Activated T-helper 1 cell treated with anti-CD3 and anti-CD28 coated beads, Interleukin-12 subunit alpha, Interleukin-12 subunit beta, Interleukin-2, Interleukin-4 antibody, amounts not matched to agents 30 ng/mL and 10 ng/mL and 1 ng/mL, durations not matched to agents 14 hours and 24 hours and 36 hours (primary cell): ENCODE measurements at regions of chr1 and their contacts with region 1.

Region 1: DNA sequence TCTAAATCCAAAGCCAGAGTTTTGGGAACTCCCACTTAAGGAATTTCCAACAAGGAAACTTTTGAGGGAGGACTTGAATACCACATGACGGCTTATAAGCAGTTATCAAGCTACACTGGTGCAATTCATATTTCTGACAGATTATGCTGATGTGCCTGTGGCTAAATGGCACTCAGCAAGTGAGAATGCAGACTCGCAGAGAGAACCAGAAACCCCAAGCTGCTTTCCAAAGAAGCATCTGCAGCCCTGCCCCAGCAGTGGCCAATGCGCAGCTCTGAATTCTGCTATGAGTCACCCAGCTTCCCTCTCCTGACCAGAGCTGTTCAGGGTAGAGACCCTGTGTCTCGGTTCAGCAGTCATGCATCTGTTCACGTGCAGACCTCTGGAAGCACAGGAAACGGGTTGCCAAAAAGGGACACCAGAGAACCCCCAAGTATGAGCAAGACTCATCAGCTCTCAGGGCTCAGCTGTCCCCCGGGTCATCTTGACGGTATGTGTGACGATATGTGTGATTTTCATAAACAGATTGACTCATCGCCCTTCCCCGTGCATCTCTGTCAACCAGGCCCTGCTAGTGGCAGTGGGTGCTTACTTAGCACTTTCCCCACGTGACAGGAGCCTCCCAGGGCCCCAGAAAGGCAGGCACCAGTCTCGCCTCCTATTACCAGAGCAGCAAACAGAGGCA is 76.3 kb downstream of the ITPKB start:
- DNase-seq: peak; percentile 78
- H3K4me3 Mint-ChIP-seq: peak overlapping the region; percentile 58
- H3K27ac Mint-ChIP-seq: peak overlapping the region; percentile 86
- H3K4me1 Mint-ChIP-seq: peaks cover 77% of the 10 kb centered on the region
- H3K27me3 Mint-ChIP-seq: no peaks in the 10 kb centered on the region

Region 2: GRCh38 chr1:226444901-226445300 is 217.9 kb before region 1 on chr1:
- intact Hi-C with region 1: no loop called
- DNase-seq: peak; percentile 73
- H3K4me3 Mint-ChIP-seq: peak overlapping the region; percentile 8
- H3K27ac Mint-ChIP-seq: peak overlapping the region; percentile 74
- H3K4me1 Mint-ChIP-seq: peaks cover 32% of the 10 kb centered on the region
- H3K27me3 Mint-ChIP-seq: peaks cover 47% of the 10 kb centered on the region

Region 3: DNA sequence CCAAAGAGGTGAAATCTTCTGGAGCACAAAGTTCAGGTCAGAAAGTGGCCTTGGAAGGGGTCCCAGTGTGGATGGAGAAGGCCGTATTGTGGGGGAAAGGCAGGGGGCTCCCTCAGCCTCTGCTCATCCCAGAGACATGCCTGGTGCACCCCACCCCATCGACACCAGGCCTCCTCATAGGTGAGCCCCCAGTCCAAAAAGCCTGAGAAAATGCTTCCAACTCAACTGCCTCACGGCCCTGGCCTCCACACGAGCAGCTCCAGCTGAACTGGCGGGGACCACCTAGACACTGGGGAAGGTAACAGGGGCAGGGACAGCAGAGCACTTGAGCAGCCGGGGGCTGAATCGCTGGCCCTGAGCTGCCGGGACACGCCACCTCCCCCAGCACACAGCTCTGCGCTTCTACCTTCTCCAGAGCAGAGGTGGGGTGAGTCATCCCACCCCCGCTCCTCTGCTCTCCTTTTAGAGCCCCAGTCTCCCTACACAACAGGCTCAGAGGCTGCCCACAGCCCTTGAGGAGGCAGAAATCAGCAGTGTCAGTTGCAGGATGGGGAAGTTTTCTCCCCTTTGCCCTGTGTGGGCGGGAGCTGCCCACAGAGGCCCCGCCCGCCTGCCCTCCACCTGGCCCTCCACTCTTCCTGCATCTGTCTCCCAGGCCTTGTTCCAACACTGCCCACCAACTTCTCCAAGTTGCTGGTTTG is 19.8 kb before region 1 on chr1:
- intact Hi-C with region 1: loop called (anchors 1 kb)
- DNase-seq: peak; percentile 50
- H3K4me3 Mint-ChIP-seq: peak overlapping the region; percentile 63
- H3K27ac Mint-ChIP-seq: peak overlapping the region; percentile 87
- H3K4me1 Mint-ChIP-seq: peaks cover 38% of the 10 kb centered on the region
- H3K27me3 Mint-ChIP-seq: no peaks in the 10 kb centered on the region

Region 4: GRCh38 chr1:226687426-226687825 is 24.6 kb after region 1 on chr1:
- intact Hi-C with region 1: loop called (anchors 1 kb)
- DNase-seq: no peak
- H3K4me3 Mint-ChIP-seq: peak overlapping the region; percentile 29
- H3K27ac Mint-ChIP-seq: peak overlapping the region; percentile 83
- H3K4me1 Mint-ChIP-seq: peaks cover 97% of the 10 kb centered on the region
- H3K27me3 Mint-ChIP-seq: no peaks in the 10 kb centered on the region

Region 5: DNA sequence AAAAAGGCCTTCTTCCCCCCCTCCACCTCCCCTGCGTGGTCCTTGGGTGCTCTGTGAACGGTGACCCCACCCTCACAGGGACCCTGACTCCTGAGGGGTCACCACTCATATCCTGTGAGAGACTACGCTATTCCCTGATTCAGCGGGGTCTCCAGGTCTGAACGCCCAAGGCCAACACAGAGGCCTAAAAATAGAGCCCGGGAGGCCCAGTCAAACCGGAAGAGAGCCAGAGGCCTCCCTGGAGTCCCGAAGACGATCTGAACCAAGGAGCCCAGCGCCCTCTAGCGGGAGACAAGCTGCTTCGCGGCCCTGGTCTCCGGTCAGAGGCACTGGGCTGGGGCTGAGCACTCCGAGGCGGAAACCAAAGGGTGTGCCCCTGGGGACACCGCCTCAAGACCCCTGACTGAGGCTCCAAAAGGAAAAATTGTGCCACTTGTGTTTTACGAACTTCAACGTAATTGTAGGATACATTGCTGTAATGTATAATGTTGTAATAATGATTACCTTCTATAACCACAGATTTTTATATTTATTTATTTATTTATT is 165.3 kb after region 1 on chr1:
- intact Hi-C with region 1: loop called (anchors 1 kb)
- DNase-seq: peak; percentile 91
- H3K4me3 Mint-ChIP-seq: no peak overlapping the region
- H3K27ac Mint-ChIP-seq: peak overlapping the region; percentile 89
- H3K4me1 Mint-ChIP-seq: peaks cover 32% of the 10 kb centered on the region
- H3K27me3 Mint-ChIP-seq: peaks cover 5% of the 10 kb centered on the region

Region 6: GRCh38 chr1:226940029-226940805 is 277.4 kb after region 1 on chr1 and contains the start of gene COQ8A:
- intact Hi-C with region 1: loop called (anchors 1 kb)
- DNase-seq: peak; percentile 100
- H3K4me3 Mint-ChIP-seq: peak within 1 kb of the TSS; percentile 89
- H3K27ac Mint-ChIP-seq: peak within 1 kb of the TSS; percentile 97
- H3K4me1 Mint-ChIP-seq: peaks cover 41% of the 10 kb centered on the region
- H3K27me3 Mint-ChIP-seq: no peaks in the 10 kb centered on the region
- total RNA-seq, gene COQ8A: 33.1 and 33.8 TPM in 2 replicates